Caco-2 (cell line): ENCODE measurements at regions of chr22 and their contacts with region 1.

Region 1: DNA sequence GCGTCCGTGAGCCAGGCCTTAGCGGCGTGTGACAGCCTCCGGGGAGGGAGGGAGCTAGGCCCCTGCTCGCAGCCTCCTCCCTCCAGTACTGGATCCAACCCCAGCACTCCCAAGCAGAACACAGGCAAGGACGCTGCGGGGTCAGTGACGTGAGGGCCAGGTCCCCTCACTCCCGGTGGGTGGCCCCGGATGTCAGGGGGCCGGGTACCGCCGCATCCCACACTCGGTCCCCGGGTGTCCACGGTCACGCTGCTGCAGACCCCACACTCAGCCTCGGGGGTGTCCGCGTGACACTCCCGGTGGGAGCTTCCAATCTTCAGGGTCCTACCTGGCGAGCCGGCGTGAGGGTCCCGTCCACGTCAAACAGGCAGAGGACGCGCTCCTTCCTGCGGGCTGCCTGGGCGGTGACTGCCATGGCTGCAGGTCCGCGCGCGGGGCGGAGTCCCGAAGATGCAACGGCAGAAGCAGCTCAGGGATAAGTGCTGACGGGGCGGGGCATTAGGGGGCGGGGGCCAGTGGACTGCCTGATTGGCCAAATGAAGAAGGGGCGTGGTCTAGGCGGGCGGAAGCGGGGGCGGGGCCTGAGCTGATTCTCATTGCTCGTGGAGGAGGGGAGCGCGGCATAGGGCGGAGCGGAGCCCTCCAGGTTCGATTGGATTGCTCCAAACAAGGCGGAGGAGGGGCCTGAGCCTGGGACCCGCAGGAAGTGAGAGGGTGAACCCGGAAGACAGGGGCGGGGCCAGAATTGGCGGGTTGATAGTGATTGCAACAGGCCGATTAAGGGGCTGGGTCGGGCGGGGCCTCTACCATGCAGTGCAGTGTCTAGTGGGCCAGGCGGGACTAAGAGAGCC is at the start of gene PMM1:
- DNase-seq: peak; percentile 100
- H3K4me3 ChIP-seq: peak within 1 kb of the TSS; percentile 92
- H3K4me3 Mint-ChIP-seq: peak within 1 kb of the TSS; percentile 87
- H3K27ac Mint-ChIP-seq: peak within 1 kb of the TSS; percentile 76
- H3K4me1 ChIP-seq: peaks cover 17% of the 10 kb centered on the region
- H3K4me1 Mint-ChIP-seq: no peaks in the 10 kb centered on the region
- H3K27me3 ChIP-seq: no peaks in the 10 kb centered on the region
- H3K27me3 Mint-ChIP-seq: no peaks in the 10 kb centered on the region
- CTCF ChIP-seq: no peak
- total RNA-seq, gene PMM1: 27.8 and 29.6 TPM in 2 replicates

Region 2: DNA sequence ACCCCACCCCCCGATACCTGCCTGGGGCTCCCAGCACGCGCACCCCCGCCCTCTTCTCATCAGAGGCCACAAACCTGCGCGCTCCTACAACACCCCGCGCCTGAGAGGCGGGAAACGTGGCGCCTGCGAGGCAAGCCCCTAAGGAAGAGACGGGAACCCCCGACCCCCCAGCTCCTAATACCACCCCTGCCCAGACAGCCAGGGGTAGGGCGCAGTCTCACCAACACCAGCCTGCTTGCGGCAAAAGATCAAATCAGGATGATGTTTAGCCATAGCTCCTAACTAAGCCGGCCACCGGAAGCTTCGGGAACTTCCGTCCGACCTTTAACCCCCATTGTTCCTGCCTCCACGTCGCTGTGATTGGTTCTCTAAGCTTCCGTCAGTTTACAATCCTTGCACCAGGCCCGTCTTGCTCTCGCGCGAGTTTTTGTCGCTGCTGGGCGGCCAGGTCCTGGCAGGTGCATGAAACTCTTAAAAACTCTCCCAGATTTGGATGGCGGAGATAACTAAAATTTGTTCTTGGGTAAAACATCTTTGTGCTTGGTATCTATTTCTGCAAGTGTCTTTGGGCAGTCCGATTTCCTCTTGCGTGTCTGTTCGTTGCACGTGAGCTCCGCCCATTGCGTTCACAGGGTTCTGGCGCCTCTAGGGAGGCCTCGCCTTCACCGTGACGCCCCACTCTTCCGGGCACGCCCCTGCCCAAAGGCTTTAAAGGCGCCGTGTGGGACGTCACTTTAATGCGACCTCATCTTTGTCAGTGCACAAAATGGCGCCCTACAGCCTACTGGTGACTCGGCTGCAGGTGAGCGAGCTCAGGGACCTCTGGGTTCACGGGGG is 121.0 kb before region 1 on chr22 and contains the starts of genes ACO2 and PHF5A:
- CTCF ChIA-PET with region 1: no interaction called
- POLR2A ChIA-PET with region 1: interaction called, 10 read pairs
- intact Hi-C with region 1: no loop called
- DNase-seq: peak; percentile 97
- H3K4me3 ChIP-seq: peak within 1 kb of the TSS; percentile 96
- H3K4me3 Mint-ChIP-seq: peak within 1 kb of the TSS; percentile 92
- H3K27ac Mint-ChIP-seq: peak within 1 kb of the TSS; percentile 100
- H3K4me1 ChIP-seq: peaks cover 18% of the 10 kb centered on the region
- H3K4me1 Mint-ChIP-seq: peaks cover under 1% of the 10 kb centered on the region
- H3K27me3 ChIP-seq: no peaks in the 10 kb centered on the region
- H3K27me3 Mint-ChIP-seq: no peaks in the 10 kb centered on the region
- CTCF ChIP-seq: no peak
- total RNA-seq, gene ACO2: 90.5 and 95.5 TPM in 2 replicates
- total RNA-seq, gene PHF5A: 75.4 and 78.6 TPM in 2 replicates

Region 3: DNA sequence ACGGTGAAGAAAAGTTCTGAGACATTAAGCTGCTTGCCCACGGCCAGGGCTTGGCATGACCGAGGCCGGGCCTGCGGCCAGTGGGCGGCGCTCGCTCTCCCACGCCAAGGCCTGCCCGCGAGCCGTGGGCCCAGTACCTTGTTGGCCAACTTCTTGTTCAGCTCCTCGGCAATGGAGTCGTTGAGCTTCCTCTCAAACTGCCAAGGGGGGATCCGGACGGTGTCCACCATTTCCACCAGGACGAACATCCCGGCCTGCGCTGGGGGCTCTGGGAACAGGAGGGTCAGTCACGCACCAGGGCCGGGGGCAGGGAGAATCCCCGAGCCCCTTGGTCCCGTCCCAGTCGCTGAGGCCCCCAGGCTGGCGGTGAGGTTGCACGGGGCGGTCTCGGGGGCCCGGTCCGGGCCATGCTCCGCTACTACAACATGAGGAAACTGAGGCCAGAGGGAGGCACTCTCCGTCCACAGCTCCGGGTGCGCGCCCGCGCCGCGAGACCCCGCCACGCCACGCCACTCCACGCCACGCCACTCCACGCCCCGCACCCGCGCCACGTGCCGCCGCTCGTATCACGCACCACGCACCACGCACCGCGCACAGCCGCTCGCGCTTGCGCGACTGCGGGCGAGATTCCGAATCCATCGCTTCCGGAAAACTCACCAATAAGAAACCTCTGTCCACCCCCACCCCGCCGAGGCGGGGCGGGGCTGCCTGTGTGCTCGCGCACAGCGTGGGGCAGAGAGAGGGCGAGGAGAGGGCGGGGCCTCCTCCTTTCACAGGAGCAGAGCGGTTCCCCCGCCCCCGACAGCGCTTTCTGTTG is 45.6 kb before region 1 on chr22 and contains the start of gene POLR3H:
- CTCF ChIA-PET with region 1: interaction called, 16 read pairs
- POLR2A ChIA-PET with region 1: interaction called, 5 read pairs
- intact Hi-C with region 1: loop called (anchors 2 kb)
- DNase-seq: peak; percentile 98
- H3K4me3 ChIP-seq: peak within 1 kb of the TSS; percentile 98
- H3K4me3 Mint-ChIP-seq: peak within 1 kb of the TSS; percentile 97
- H3K27ac Mint-ChIP-seq: peak within 1 kb of the TSS; percentile 79
- H3K4me1 ChIP-seq: peaks cover 18% of the 10 kb centered on the region
- H3K4me1 Mint-ChIP-seq: peaks cover 28% of the 10 kb centered on the region
- H3K27me3 ChIP-seq: no peaks in the 10 kb centered on the region
- H3K27me3 Mint-ChIP-seq: no peaks in the 10 kb centered on the region
- CTCF ChIP-seq: peak in 1 of 2 experiments; percentile 79
- total RNA-seq, gene POLR3H: 42.2 and 45.4 TPM in 2 replicates

Region 4: GRCh38 chr22:41621099-41621910 is 31.7 kb after region 1 on chr22 and contains the start of gene XRCC6:
- CTCF ChIA-PET with region 1: interaction called, 7 read pairs
- POLR2A ChIA-PET with region 1: interaction called, 27 read pairs
- intact Hi-C with region 1: loop called (anchors 1 kb)
- DNase-seq: peak; percentile 99 to 100
- H3K4me3 ChIP-seq: peak within 1 kb of the TSS; percentile 98
- H3K4me3 Mint-ChIP-seq: peak within 1 kb of the TSS; percentile 90
- H3K27ac Mint-ChIP-seq: peak within 1 kb of the TSS; percentile 98
- H3K4me1 ChIP-seq: peaks cover 17% of the 10 kb centered on the region
- H3K4me1 Mint-ChIP-seq: no peaks in the 10 kb centered on the region
- H3K27me3 ChIP-seq: no peaks in the 10 kb centered on the region
- H3K27me3 Mint-ChIP-seq: no peaks in the 10 kb centered on the region
- CTCF ChIP-seq: no peak
- total RNA-seq, gene XRCC6: 413 and 414 TPM in 2 replicates

Region 5: GRCh38 chr22:41650821-41651220 is 61.2 kb after region 1 on chr22:
- CTCF ChIA-PET with region 1: no interaction called
- POLR2A ChIA-PET with region 1: interaction called, 12 read pairs
- intact Hi-C with region 1: no loop called
- DNase-seq: no peak
- H3K4me3 ChIP-seq: no peak overlapping the region
- H3K4me3 Mint-ChIP-seq: no peak overlapping the region
- H3K27ac Mint-ChIP-seq: no peak overlapping the region
- H3K4me1 ChIP-seq: no peaks in the 10 kb centered on the region
- H3K4me1 Mint-ChIP-seq: no peaks in the 10 kb centered on the region
- H3K27me3 ChIP-seq: no peaks in the 10 kb centered on the region
- H3K27me3 Mint-ChIP-seq: no peaks in the 10 kb centered on the region
- CTCF ChIP-seq: no peak

Region 6: GRCh38 chr22:42079319-42080251 is 490.0 kb after region 1 on chr22 and contains the start of gene SMDT1:
- CTCF ChIA-PET with region 1: no interaction called
- POLR2A ChIA-PET with region 1: no interaction called
- intact Hi-C with region 1: loop called (anchors 10 kb)
- DNase-seq: peak; percentile 98 to 99
- H3K4me3 ChIP-seq: peak within 1 kb of the TSS; percentile 94
- H3K4me3 Mint-ChIP-seq: peak within 1 kb of the TSS; percentile 96
- H3K27ac Mint-ChIP-seq: peak within 1 kb of the TSS; percentile 93
- H3K4me1 ChIP-seq: peaks cover 14% of the 10 kb centered on the region
- H3K4me1 Mint-ChIP-seq: peaks cover 10% of the 10 kb centered on the region
- H3K27me3 ChIP-seq: no peaks in the 10 kb centered on the region
- H3K27me3 Mint-ChIP-seq: no peaks in the 10 kb centered on the region
- CTCF ChIP-seq: no peak
- total RNA-seq, gene SMDT1: 65.7 and 68.6 TPM in 2 replicates